Natural killer cell (primary cell): ENCODE measurements at regions of chr11 and their contacts with region 1.

Region 1: DNA sequence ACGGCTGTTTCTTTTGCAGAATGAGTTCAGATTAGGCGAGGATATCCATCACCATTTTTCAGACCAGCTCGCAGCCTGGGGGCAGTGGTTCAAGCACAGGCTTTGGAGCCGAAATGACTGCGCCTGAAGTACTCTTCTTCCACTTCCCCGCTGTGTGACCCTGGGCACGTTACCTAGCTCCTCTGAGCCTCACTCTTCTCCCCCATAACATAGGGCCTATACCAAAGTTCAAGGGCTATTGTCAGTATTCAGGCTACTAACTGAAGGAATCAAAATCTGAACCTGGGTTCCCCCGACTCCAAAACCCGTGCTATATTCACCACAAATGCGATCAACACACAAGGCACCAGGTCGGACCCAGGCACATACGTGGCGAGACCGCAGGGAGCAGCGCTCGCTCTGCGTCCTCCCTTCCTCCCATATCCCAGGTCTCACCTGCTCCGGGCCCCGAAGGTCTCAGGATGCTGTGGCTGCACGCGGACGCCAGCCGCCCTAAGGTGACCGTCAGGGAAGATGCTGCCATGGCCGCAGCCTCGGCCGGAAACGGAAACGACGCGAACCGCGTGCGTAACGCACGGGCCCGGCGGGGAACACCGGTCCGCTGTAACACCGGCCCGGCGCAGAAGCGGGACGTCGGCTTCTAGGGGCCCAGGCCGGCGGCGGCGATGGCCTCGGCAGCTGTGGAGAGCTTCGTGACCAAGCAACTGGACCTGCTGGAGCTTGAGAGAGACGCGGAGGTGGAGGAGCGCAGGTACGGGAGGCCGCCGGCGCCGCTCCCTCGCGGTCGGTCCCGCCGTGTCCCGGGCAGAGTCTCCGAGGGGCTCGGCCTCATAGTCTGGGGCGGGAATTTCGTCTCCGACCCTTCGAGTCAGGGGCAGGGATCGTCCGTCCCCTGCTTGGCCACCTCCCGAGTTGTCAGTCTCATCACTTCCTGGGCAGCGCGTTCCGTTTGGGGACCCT is at the starts of genes IGHMBP2 and MRPL21:
- DNase-seq: peak; percentile 88 to 93
- ATAC-seq: peak; percentile 93 to 97 (median 97)
- H3K4me3 ChIP-seq: peak within 1 kb of the TSS; percentile 63
- H3K4me3 Mint-ChIP-seq: peak within 1 kb of the TSS; percentile 99
- H3K27ac ChIP-seq: peak within 1 kb of the TSS; percentile 81
- H3K27ac Mint-ChIP-seq: peak within 1 kb of the TSS; percentile 93 to 98
- H3K4me1 ChIP-seq: peaks cover 20% of the 10 kb centered on the region
- H3K4me1 Mint-ChIP-seq: peaks cover 37 to 57% of the 10 kb centered on the region in 2 donors
- H3K27me3 ChIP-seq: no peaks in the 10 kb centered on the region
- H3K27me3 Mint-ChIP-seq: no peaks in the 10 kb centered on the region
- CTCF ChIP-seq: no peak
- total RNA-seq, gene IGHMBP2: 31.5 to 52.3 (median 48.5) TPM
- total RNA-seq, gene MRPL21: 39.0 to 47.4 (median 40.3) TPM

Region 2: DNA sequence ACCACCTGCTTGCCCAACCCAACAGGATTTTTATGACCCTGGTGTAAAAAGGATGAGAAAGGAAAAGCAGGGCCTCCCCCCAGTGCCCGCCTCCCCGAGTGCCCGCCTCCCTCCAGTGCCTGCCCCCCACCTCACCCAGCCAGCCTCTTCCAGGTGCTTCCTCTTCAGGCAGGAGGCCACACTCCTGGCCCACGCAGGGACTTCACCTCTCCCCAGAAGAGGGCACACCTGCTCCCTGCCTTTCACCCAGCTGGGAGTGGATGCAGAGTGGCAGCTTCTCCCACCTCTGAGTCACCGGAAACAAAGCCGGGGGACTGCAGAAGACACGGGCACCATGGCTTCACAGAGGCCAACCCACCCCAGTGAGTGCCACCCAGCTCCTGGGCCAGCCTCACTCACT is 78.0 kb before region 1 on chr11:
- intact Hi-C with region 1: no loop called
- DNase-seq: peak; percentile 43 to 73
- ATAC-seq: peak; percentile 77 to 94 (median 86)
- H3K4me3 ChIP-seq: no peak overlapping the region
- H3K4me3 Mint-ChIP-seq: peak overlapping the region; percentile 55
- H3K27ac ChIP-seq: peak overlapping the region; percentile 13
- H3K27ac Mint-ChIP-seq: peak overlapping the region; percentile 67 to 86
- H3K4me1 ChIP-seq: peaks cover 34% of the 10 kb centered on the region
- H3K4me1 Mint-ChIP-seq: peaks cover 49 to 61% of the 10 kb centered on the region in 2 donors
- H3K27me3 ChIP-seq: no peaks in the 10 kb centered on the region
- H3K27me3 Mint-ChIP-seq: no peaks in the 10 kb centered on the region
- CTCF ChIP-seq: peak; percentile 16

Region 3: GRCh38 chr11:68839054-68839865 is 64.3 kb before region 1 on chr11:
- intact Hi-C with region 1: loop called (anchors 1 kb)
- DNase-seq: peak; percentile 90 to 97
- ATAC-seq: peak; percentile 57 to 86 (median 74)
- H3K4me3 ChIP-seq: peak overlapping the region; percentile 69
- H3K4me3 Mint-ChIP-seq: peak overlapping the region; percentile 88
- H3K27ac ChIP-seq: peak overlapping the region; percentile 75
- H3K27ac Mint-ChIP-seq: peak overlapping the region; percentile 88 to 91
- H3K4me1 ChIP-seq: peaks cover 68% of the 10 kb centered on the region
- H3K4me1 Mint-ChIP-seq: peaks cover 68 to 71% of the 10 kb centered on the region in 2 donors
- H3K27me3 ChIP-seq: no peaks in the 10 kb centered on the region
- H3K27me3 Mint-ChIP-seq: no peaks in the 10 kb centered on the region
- CTCF ChIP-seq: no peak

Region 4: GRCh38 chr11:69010964-69011623 is 107.5 kb after region 1 on chr11:
- intact Hi-C with region 1: no loop called
- DNase-seq: peak; percentile 16 to 33
- ATAC-seq: peak; percentile 49 to 90 (median 84)
- H3K4me3 ChIP-seq: no peak overlapping the region
- H3K4me3 Mint-ChIP-seq: peak overlapping the region; percentile 25
- H3K27ac ChIP-seq: no peak overlapping the region
- H3K27ac Mint-ChIP-seq: no peak overlapping the region
- H3K4me1 ChIP-seq: peaks cover 18% of the 10 kb centered on the region
- H3K4me1 Mint-ChIP-seq: peaks cover 0 to 12% of the 10 kb centered on the region in 2 donors
- H3K27me3 ChIP-seq: peaks cover 26% of the 10 kb centered on the region
- H3K27me3 Mint-ChIP-seq: peaks cover 14 to 18% of the 10 kb centered on the region in 2 donors
- CTCF ChIP-seq: no peak

Region 5: GRCh38 chr11:69088676-69089146 is 185.1 kb after region 1 on chr11:
- intact Hi-C with region 1: loop called (anchors 5 kb)
- DNase-seq: peak; percentile 49 to 74
- ATAC-seq: peak; percentile 64 to 88 (median 78)
- H3K4me3 ChIP-seq: no peak overlapping the region
- H3K4me3 Mint-ChIP-seq: no peak overlapping the region
- H3K27ac ChIP-seq: no peak overlapping the region
- H3K27ac Mint-ChIP-seq: no peak overlapping the region
- H3K4me1 ChIP-seq: peaks cover 5% of the 10 kb centered on the region
- H3K4me1 Mint-ChIP-seq: peaks cover 0 to 8% of the 10 kb centered on the region in 2 donors
- H3K27me3 ChIP-seq: no peaks in the 10 kb centered on the region
- H3K27me3 Mint-ChIP-seq: no peaks in the 10 kb centered on the region
- CTCF ChIP-seq: peak; percentile 64

Region 6: DNA sequence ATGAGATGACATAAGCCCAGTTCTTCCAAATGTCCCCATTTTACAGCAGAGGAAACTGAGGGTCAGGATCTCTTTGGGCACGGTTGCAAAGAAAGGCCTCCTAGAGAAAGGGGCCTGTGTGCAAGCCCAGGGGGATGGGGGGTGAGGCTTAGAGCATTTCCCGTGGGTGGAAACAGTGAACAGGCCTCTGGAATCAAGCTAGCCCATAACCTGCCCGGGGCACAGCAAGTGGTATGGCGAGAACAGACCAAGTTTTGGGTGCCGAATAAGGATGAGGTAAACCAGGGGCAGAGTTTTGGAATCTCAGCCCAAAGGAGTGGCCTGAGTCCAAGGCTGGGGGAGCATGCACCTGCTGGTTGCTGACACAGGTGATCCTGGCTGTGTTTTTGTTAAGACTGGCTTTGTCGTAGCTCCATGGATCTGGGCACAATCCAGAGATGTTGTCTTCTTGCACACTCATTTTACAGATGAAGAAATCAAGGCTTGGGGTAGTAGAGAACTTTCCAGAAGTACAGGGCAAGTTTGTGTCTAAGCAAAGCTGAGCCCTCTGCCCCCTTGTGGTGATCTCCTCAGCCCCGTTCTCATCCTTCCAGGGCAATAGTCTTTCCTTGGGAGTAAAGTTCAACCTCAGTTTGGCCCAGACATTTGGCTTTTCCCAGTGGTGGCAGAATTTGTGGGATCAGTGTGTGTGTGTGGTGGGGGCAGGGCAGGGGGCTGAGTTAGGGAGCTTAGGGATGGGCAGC is 336.9 kb after region 1 on chr11:
- intact Hi-C with region 1: no loop called
- DNase-seq: peak in 1 of 2 donors; percentile 27
- ATAC-seq: no peak
- H3K4me3 ChIP-seq: no peak overlapping the region
- H3K4me3 Mint-ChIP-seq: no peak overlapping the region
- H3K27ac ChIP-seq: no peak overlapping the region
- H3K27ac Mint-ChIP-seq: no peak overlapping the region
- H3K4me1 ChIP-seq: no peaks in the 10 kb centered on the region
- H3K4me1 Mint-ChIP-seq: peaks cover 0 to 6% of the 10 kb centered on the region in 2 donors
- H3K27me3 ChIP-seq: no peaks in the 10 kb centered on the region
- H3K27me3 Mint-ChIP-seq: peaks cover 3 to 35% of the 10 kb centered on the region in 2 donors
- CTCF ChIP-seq: no peak